PC-9 (cell line): ENCODE measurements at regions of chr14 and their contacts with region 1.

Region 1: DNA sequence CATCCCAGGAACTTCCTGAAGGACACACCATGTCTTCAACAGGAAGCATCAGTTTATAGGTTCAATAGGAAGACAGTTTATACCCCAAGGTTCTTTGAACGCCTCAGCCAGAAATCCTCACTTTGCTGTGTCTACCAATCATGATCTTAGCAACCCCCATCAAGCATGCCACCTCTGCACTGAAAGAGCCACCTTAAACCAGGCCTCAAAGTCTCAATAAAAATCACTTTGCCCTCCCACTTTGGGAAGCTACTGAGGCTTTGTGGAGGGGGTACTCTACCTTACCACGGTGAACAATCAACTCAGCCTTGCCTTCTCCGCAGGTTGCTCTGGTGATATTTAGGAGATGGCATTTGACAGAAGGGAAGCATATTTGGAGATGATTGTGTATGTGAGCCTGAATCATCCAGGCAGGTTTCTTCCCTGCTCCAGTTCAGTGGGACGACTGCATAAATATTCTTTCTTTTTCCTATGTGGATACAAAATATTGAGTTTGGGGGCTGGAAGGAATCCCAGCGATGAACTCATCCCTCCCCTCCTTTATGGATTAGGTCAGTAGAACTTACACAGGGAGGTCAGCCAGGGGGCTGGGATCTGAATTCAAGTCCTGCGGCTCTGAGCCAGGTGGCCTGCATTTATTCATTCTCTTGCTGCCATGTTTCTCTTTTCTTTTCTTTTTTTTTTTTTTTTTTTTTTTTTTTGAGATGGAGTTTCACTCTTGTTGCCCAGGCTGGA is 42.8 kb upstream of the VASH1 start:
- DNase-seq: no peak
- H3K4me3 ChIP-seq: no peak overlapping the region
- H3K27ac ChIP-seq: no peak overlapping the region
- H3K4me1 ChIP-seq: no peaks in the 10 kb centered on the region
- H3K27me3 ChIP-seq: peaks cover 97% of the 10 kb centered on the region
- CTCF ChIP-seq: no peak

Region 2: GRCh38 chr14:76490735-76491134 is 227.7 kb before region 1 on chr14:
- CTCF ChIA-PET with region 1: interaction called, 11 read pairs
- POLR2A ChIA-PET with region 1: no interaction called
- intact Hi-C with region 1: no loop called
- DNase-seq: no peak
- H3K4me3 ChIP-seq: no peak overlapping the region
- H3K27ac ChIP-seq: no peak overlapping the region
- H3K4me1 ChIP-seq: no peaks in the 10 kb centered on the region
- H3K27me3 ChIP-seq: peaks cover 96% of the 10 kb centered on the region
- CTCF ChIP-seq: no peak

Region 3: DNA sequence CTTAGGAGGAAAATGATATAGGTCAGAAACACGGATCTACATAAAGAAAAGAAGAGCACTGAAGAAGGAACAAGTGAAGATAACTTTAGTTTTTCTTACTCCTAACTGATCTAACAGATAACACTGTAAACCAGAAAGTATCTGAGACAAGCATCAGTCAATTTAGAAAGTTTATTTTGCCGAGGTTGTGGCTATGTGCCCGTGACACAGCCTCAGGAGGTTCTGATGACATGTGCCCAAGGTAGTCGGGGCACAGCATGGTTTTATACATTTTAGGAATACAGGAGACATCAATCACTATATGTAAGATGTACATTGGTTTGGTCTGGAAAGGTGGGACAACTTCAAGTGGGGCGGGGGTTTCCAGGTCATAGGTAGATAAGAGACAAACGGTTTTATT is 681.7 kb after region 1 on chr14:
- CTCF ChIA-PET with region 1: no interaction called
- POLR2A ChIA-PET with region 1: no interaction called
- intact Hi-C with region 1: no loop called
- DNase-seq: no peak
- H3K4me3 ChIP-seq: no peak overlapping the region
- H3K27ac ChIP-seq: no peak overlapping the region
- H3K4me1 ChIP-seq: no peaks in the 10 kb centered on the region
- H3K27me3 ChIP-seq: no peaks in the 10 kb centered on the region
- CTCF ChIP-seq: no peak